ENCODE measurements at regions of chr9 and their contacts with region 1.

Region 1: GRCh38 chr9:75633451-75634057 is 256.9 kb upstream of the PCSK5 start:
- DNase-seq: no peak
- ATAC-seq: no peak
- H3K4me3 ChIP-seq: no peak overlapping the region
- H3K27ac ChIP-seq: no peak overlapping the region
- H3K4me1 ChIP-seq: peaks cover 0 to 19% (median 0%) of the 10 kb centered on the region in 9 donors
- H3K27me3 ChIP-seq: no peaks in the 10 kb centered on the region
- CTCF ChIP-seq: no peak

Region 2: GRCh38 chr9:75529463-75529862 is 104.1 kb before region 1 on chr9:
- intact Hi-C with region 1: loop called in 1 of 10 experiments (anchors 5 kb)
- DNase-seq: no peak
- ATAC-seq: no peak
- H3K4me3 ChIP-seq: no peak overlapping the region
- H3K27ac ChIP-seq: no peak overlapping the region
- H3K4me1 ChIP-seq: peaks cover 0 to 13% (median 0%) of the 10 kb centered on the region in 9 donors
- H3K27me3 ChIP-seq: no peaks in the 10 kb centered on the region
- CTCF ChIP-seq: no peak

Measured in heart right ventricle (tissue), 16 donors.